Transverse colon (tissue), 4 donors: ENCODE measurements at regions of chr18 and their contacts with region 1.

Region 1: GRCh38 chr18:61581578-61582201 is 248.5 kb downstream of the CDH20 start:
- DNase-seq: peak; percentile 79
- H3K4me3 ChIP-seq: peak overlapping the region in 3 of 4 donors; percentile 32 to 52 (median 36)
- H3K27ac ChIP-seq: peak overlapping the region; percentile 31 to 71 (median 54)
- H3K4me1 ChIP-seq: peaks cover 0 to 21% (median 12%) of the 10 kb centered on the region in 4 donors
- H3K27me3 ChIP-seq: peaks cover 3% of the 10 kb centered on the region
- CTCF ChIP-seq: peak; percentile 92 to 99 (median 99)
- EP300 ChIP-seq: no peak
- POLR2A ChIP-seq: no peak

Region 2: DNA sequence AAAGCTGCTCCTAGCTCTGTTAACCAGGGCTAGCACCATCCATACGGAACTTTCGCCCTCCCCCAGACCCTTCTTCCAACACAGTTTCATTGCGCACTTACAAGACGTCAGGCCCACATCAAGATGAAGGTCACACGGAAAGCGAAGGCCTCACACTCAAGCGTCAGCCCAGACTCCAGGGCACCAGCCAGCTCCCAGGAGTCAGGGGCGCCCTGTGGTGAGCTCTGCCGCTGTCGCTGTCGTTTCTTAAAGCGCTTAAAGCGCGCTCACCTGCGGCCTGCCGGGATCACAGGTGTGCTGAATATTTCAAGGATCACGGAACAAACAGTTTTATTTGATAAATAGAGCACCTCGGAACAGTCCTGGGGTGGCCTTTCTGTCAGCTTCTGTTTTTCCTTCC is 85.3 kb before region 1 on chr18:
- in situ Hi-C with region 1: no loop called
- intact Hi-C with region 1: no loop called
- DNase-seq: no peak
- H3K4me3 ChIP-seq: no peak overlapping the region
- H3K27ac ChIP-seq: no peak overlapping the region
- H3K4me1 ChIP-seq: no peaks in the 10 kb centered on the region
- H3K27me3 ChIP-seq: peaks cover 3% of the 10 kb centered on the region
- CTCF ChIP-seq: no peak
- EP300 ChIP-seq: no peak
- POLR2A ChIP-seq: no peak

Region 3: GRCh38 chr18:61893971-61894750 is 312.5 kb after region 1 on chr18:
- in situ Hi-C with region 1: loop called in 3 of 4 experiments (anchors 10 to 25 kb)
- intact Hi-C with region 1: no loop called
- DNase-seq: peak; percentile 88
- H3K4me3 ChIP-seq: peak overlapping the region; percentile 79 to 95 (median 90)
- H3K27ac ChIP-seq: peak overlapping the region; percentile 83 to 87 (median 86)
- H3K4me1 ChIP-seq: peaks cover 7 to 33% (median 10%) of the 10 kb centered on the region in 4 donors
- H3K27me3 ChIP-seq: no peaks in the 10 kb centered on the region
- CTCF ChIP-seq: peak in 2 of 5 experiments; percentile 30 to 36
- EP300 ChIP-seq: no peak
- POLR2A ChIP-seq: peak; percentile 24

Region 4: GRCh38 chr18:61901323-61901986 is 319.8 kb after region 1 on chr18:
- in situ Hi-C with region 1: loop called (anchors 10 to 25 kb)
- intact Hi-C with region 1: no loop called
- DNase-seq: peak; percentile 55
- H3K4me3 ChIP-seq: no peak overlapping the region
- H3K27ac ChIP-seq: no peak overlapping the region
- H3K4me1 ChIP-seq: peaks cover 0 to 8% (median 0%) of the 10 kb centered on the region in 4 donors
- H3K27me3 ChIP-seq: no peaks in the 10 kb centered on the region
- CTCF ChIP-seq: peak; percentile 85 to 93 (median 90)
- EP300 ChIP-seq: no peak
- POLR2A ChIP-seq: no peak